Common myeloid progenitor, CD34-positive (primary cell): ENCODE measurements at regions of chr7 and their contacts with region 1.

Region 1: GRCh38 chr7:20330240-20330927 is at the start of gene ITGB8:
- DNase-seq: peak; percentile 59 to 89 (median 85)
- H3K4me3 ChIP-seq: peak within 1 kb of the TSS; percentile 77 to 96 (median 87)
- H3K27ac ChIP-seq: peak within 1 kb of the TSS; percentile 43 to 74
- H3K4me1 ChIP-seq: peaks cover 1 to 40% (median 27%) of the 10 kb centered on the region in 4 experiments
- H3K27me3 ChIP-seq: no peaks in the 10 kb centered on the region

Region 2: DNA sequence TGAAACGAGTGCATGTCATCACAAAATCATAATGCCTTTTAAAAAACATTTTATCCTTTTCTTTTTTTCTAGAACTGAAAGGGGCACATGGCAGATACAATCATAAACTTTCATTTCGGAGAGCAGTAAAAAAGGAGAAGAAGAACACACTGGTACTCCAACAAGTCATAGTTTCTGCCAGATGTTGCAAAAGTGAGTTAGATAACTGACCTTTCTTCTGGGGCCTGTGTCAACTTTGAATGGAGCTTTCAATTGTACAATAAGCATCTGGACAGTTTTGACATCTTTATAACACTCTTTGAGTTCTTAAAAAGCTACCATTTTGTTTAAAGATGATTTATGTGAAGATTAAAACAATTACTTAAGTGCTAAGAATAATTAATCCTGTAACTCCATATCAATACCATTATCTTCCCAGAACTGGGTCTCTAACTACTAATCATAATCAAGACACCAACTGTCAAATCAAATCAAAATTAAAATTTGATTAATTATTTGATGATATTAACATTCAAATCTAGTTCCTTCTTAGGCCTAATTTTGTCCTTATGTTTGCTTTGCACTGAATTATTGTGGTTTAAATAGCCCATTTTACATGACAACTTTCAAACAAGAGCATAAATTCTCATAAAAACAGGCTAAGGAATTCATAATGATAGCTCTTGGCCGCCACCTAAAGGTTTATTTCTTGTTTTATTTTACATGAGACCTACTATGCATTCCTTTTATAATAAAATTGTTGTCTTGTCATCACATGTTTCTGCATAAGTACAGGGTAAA is 19.2 kb before region 1 on chr7:
- CTCF ChIA-PET with region 1: interaction called, 30 read pairs
- POLR2A ChIA-PET with region 1: no interaction called
- DNase-seq: peak; percentile 63 to 83 (median 82)
- H3K4me3 ChIP-seq: no peak overlapping the region
- H3K27ac ChIP-seq: no peak overlapping the region
- H3K4me1 ChIP-seq: peaks cover 3 to 17% (median 5%) of the 10 kb centered on the region in 4 experiments
- H3K27me3 ChIP-seq: no peaks in the 10 kb centered on the region

Region 3: GRCh38 chr7:20316706-20317105 is 13.7 kb before region 1 on chr7:
- CTCF ChIA-PET with region 1: interaction called, 30 read pairs
- POLR2A ChIA-PET with region 1: no interaction called
- DNase-seq: no peak
- H3K4me3 ChIP-seq: no peak overlapping the region
- H3K27ac ChIP-seq: no peak overlapping the region
- H3K4me1 ChIP-seq: peaks cover 3 to 8% (median 5%) of the 10 kb centered on the region in 4 experiments
- H3K27me3 ChIP-seq: no peaks in the 10 kb centered on the region